ENCODE measurements at regions of chr6 and their contacts with region 1.

Region 1: GRCh38 chr6:127120787-127121636 is 2.5 kb downstream of the RSPO3 start:
- DNase-seq: peak; percentile 68
- H3K4me3 Mint-ChIP-seq: no peak overlapping the region
- H3K27ac Mint-ChIP-seq: no peak overlapping the region
- H3K4me1 Mint-ChIP-seq: peaks cover 4% of the 10 kb centered on the region
- H3K27me3 Mint-ChIP-seq: peaks cover 99% of the 10 kb centered on the region
- CTCF ChIP-seq: peak; percentile 84

Region 2: DNA sequence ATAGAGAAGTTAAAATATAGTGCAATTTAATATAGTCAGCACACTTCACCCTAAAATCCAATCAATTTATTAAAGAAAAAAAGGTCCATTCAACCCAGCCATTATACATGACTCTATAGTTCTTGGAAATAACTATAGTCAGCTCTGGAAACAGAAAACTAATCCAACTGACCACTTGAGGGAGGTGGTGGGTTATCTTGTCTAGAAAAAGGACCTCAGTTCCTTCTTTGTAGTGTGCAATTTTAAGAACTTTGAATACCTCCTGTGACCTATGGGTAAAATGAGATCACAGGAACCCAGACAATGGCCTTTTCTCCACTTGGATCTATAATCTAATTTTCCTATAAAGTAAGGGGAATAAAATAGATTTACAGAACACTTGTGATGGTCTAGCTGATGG is 944.7 kb before region 1 on chr6:
- CTCF ChIA-PET with region 1: no interaction called
- POLR2A ChIA-PET with region 1: no interaction called
- intact Hi-C with region 1: loop called (anchors 1 kb)
- DNase-seq: peak; percentile 48
- H3K4me3 Mint-ChIP-seq: no peak overlapping the region
- H3K27ac Mint-ChIP-seq: no peak overlapping the region
- H3K4me1 Mint-ChIP-seq: peaks cover 7% of the 10 kb centered on the region
- H3K27me3 Mint-ChIP-seq: no peaks in the 10 kb centered on the region
- CTCF ChIP-seq: peak; percentile 48

Region 3: DNA sequence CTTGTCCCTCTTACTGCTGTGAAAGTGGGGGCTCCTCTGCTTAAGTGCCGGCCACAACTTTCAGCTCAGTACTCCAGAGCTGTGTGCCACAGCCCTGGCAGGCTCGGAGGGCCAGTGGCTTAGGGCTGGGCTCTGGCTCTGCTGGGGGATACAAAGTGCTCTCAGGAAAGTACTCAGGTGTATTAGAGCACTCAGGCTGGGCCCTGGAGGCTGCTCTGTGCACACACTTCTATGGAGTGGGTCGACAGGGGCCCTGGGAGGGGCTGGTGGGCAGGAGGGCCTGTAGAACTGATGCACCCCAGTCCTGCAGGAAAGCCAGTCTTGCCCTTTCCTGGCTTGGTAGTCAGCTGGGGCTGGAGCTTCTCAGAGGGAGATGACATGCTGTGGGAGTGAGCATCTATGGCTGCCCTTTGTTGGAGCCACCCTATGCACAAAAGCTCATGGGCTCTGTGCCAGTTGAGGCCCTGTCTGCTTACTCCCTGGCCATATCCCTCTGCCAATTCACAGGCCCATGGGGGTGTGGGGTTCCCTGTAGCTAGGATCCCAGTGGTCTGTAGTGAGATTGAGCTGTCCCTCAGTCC is 759.1 kb before region 1 on chr6:
- CTCF ChIA-PET with region 1: no interaction called
- POLR2A ChIA-PET with region 1: no interaction called
- intact Hi-C with region 1: loop called (anchors 1 kb)
- DNase-seq: no peak
- H3K4me3 Mint-ChIP-seq: no peak overlapping the region
- H3K27ac Mint-ChIP-seq: no peak overlapping the region
- H3K4me1 Mint-ChIP-seq: no peaks in the 10 kb centered on the region
- H3K27me3 Mint-ChIP-seq: no peaks in the 10 kb centered on the region
- CTCF ChIP-seq: no peak

Region 4: GRCh38 chr6:126657561-126658175 is 463.3 kb before region 1 on chr6:
- CTCF ChIA-PET with region 1: interaction called, 3 read pairs
- POLR2A ChIA-PET with region 1: no interaction called
- intact Hi-C with region 1: loop called (anchors 10 kb)
- DNase-seq: peak; percentile 52
- H3K4me3 Mint-ChIP-seq: no peak overlapping the region
- H3K27ac Mint-ChIP-seq: no peak overlapping the region
- H3K4me1 Mint-ChIP-seq: no peaks in the 10 kb centered on the region
- H3K27me3 Mint-ChIP-seq: peaks cover 24% of the 10 kb centered on the region
- CTCF ChIP-seq: peak; percentile 66

Region 5: GRCh38 chr6:127352524-127352923 is 231.5 kb after region 1 on chr6:
- CTCF ChIA-PET with region 1: no interaction called
- POLR2A ChIA-PET with region 1: no interaction called
- intact Hi-C with region 1: no loop called
- DNase-seq: no peak
- H3K4me3 Mint-ChIP-seq: no peak overlapping the region
- H3K27ac Mint-ChIP-seq: no peak overlapping the region
- H3K4me1 Mint-ChIP-seq: peaks cover 6% of the 10 kb centered on the region
- H3K27me3 Mint-ChIP-seq: no peaks in the 10 kb centered on the region
- CTCF ChIP-seq: no peak